B cell (primary cell): ENCODE measurements at regions of chr21 and their contacts with region 1.

Region 1: DNA sequence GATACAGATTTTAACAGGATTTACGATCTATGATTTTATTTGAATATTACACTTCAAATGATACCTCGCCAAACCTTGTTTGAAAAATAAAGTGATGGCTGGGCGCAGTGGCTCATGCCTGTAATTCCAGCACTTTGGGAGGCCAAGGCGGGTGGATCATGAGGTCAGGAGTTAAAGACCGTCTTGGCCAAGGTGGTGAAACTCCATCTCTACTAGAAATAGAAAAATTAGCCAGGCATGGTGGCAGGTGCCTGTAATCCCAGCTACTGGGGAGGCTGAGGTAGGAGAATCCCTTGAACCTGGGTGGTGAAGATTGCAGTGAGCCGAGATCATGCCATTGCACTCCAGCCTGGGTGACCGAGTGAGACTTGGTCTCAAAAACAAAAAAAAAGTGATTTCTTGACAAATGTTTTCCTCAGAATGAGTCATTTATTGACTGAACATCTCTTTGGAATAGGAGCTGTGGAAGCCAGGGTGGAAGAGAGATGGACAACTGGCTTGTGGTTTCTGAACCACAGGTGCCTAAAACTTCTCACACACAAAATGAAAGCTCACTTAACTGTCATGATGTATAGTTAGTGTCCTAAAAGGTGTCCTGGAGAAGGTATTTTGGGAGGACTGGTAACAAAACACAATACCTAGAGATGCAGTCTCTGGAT is 11.9 kb downstream of the PKNOX1 start:
- DNase-seq: no peak
- ATAC-seq: no peak
- H3K4me3 ChIP-seq: no peak overlapping the region
- H3K4me3 Mint-ChIP-seq: no peak overlapping the region
- H3K27ac ChIP-seq: no peak overlapping the region
- H3K27ac Mint-ChIP-seq: no peak overlapping the region
- H3K4me1 ChIP-seq: peaks cover 0 to 3% of the 10 kb centered on the region in 2 donors
- H3K4me1 Mint-ChIP-seq: peaks cover 24% of the 10 kb centered on the region
- H3K27me3 ChIP-seq: no peaks in the 10 kb centered on the region
- H3K27me3 Mint-ChIP-seq: no peaks in the 10 kb centered on the region
- CTCF ChIP-seq: no peak

Region 2: DNA sequence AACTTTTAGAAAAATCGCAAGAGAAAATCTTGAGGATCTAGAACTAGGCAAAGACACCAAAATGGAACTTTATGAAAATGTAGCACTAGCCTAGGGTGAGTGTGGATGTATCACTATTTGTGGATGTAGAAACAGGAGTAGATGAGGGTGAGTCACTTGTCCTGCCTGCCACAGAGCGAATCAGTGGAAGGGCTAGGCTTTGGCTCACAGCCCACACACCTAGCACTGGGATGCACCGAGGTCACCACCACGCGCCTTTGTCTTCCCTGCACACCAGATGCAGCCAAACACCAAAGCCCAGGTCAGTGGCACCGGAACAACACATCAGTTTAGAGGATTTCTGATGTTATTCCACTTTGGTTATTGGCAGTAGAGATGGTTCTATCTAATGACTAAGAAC is 26.3 kb after region 1 on chr21:
- CTCF ChIA-PET with region 1: no interaction called
- POLR2A ChIA-PET with region 1: no interaction called
- intact Hi-C with region 1: no loop called
- DNase-seq: no peak
- ATAC-seq: no peak
- H3K4me3 ChIP-seq: no peak overlapping the region
- H3K4me3 Mint-ChIP-seq: no peak overlapping the region
- H3K27ac ChIP-seq: no peak overlapping the region
- H3K27ac Mint-ChIP-seq: peak overlapping the region; percentile 70
- H3K4me1 ChIP-seq: peaks cover 16 to 19% of the 10 kb centered on the region in 2 donors
- H3K4me1 Mint-ChIP-seq: peaks cover 21% of the 10 kb centered on the region
- H3K27me3 ChIP-seq: no peaks in the 10 kb centered on the region
- H3K27me3 Mint-ChIP-seq: no peaks in the 10 kb centered on the region
- CTCF ChIP-seq: no peak

Region 3: GRCh38 chr21:43805275-43805800 is 819.1 kb after region 1 on chr21:
- CTCF ChIA-PET with region 1: no interaction called
- POLR2A ChIA-PET with region 1: interaction called, 10 read pairs
- intact Hi-C with region 1: no loop called
- DNase-seq: peak; percentile 95
- ATAC-seq: peak; percentile 98
- H3K4me3 ChIP-seq: peak overlapping the region in 1 of 5 experiments; percentile 16
- H3K4me3 Mint-ChIP-seq: peak overlapping the region; percentile 77
- H3K27ac ChIP-seq: peak overlapping the region; percentile 6 to 78
- H3K27ac Mint-ChIP-seq: peak overlapping the region; percentile 84
- H3K4me1 ChIP-seq: peaks cover 26 to 42% of the 10 kb centered on the region in 2 donors
- H3K4me1 Mint-ChIP-seq: peaks cover 22% of the 10 kb centered on the region
- H3K27me3 ChIP-seq: peaks cover 0 to 11% (median 2%) of the 10 kb centered on the region in 4 experiments
- H3K27me3 Mint-ChIP-seq: no peaks in the 10 kb centered on the region
- CTCF ChIP-seq: no peak